Activated T-helper 1 cell treated with anti-CD3 and anti-CD28 coated beads, Interleukin-12 subunit alpha, Interleukin-12 subunit beta, Interleukin-2, Interleukin-4 antibody, amounts not matched to agents 30 ng/mL and 10 ng/mL and 1 ng/mL, durations not matched to agents 14 hours and 24 hours and 36 hours (primary cell): ENCODE measurements at regions of chr17 and their contacts with region 1.

Region 1: GRCh38 chr17:56833809-56834379 is at the starts of genes C17orf67 and DGKE:
- DNase-seq: peak; percentile 97
- H3K4me3 Mint-ChIP-seq: peak within 1 kb of the TSS; percentile 94
- H3K27ac Mint-ChIP-seq: peak within 1 kb of the TSS; percentile 96
- H3K4me1 Mint-ChIP-seq: peaks cover 65% of the 10 kb centered on the region
- H3K27me3 Mint-ChIP-seq: no peaks in the 10 kb centered on the region
- total RNA-seq, gene C17orf67: 3.1 TPM in 2 replicates
- total RNA-seq, gene DGKE: 31.8 and 34.3 TPM in 2 replicates

Region 2: GRCh38 chr17:55527540-55528118 is 1306.3 kb before region 1 on chr17:
- intact Hi-C with region 1: no loop called
- DNase-seq: no peak
- H3K4me3 Mint-ChIP-seq: no peak overlapping the region
- H3K27ac Mint-ChIP-seq: no peak overlapping the region
- H3K4me1 Mint-ChIP-seq: peaks cover 9% of the 10 kb centered on the region
- H3K27me3 Mint-ChIP-seq: peaks cover 5% of the 10 kb centered on the region

Region 3: DNA sequence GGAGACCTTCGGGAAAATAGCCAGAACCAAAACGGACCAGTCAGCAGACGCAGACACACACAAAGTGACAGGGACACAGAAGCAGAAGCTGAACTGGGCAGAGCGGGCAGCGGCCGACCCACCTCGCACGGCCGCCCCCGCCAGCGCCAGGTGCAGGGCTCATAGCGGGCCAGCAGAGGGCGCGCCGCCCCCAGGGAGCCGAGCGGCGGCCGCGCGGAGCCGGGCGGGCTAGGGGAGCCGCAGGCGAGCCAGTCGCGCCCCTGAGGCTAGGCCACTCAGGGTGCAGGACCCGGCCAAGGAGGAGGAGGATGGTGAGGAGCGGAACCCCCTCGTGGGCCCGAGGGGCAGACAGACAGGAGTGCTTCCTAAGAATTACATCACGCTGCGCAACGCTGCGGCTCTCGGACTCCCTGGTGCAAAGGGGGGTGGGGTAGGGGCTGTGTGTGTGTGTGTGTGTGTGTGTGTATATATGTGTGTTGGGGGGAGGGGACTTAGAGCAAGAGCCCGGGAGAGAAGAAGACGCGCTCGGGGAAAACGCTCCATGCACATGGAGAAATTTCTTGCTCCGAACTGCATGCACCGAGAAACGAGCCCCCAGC is 241.3 kb before region 1 on chr17:
- intact Hi-C with region 1: loop called (anchors 1 kb)
- DNase-seq: peak; percentile 39
- H3K4me3 Mint-ChIP-seq: peak overlapping the region; percentile 66
- H3K27ac Mint-ChIP-seq: no peak overlapping the region
- H3K4me1 Mint-ChIP-seq: peaks cover 17% of the 10 kb centered on the region
- H3K27me3 Mint-ChIP-seq: peaks cover 56% of the 10 kb centered on the region

Region 4: DNA sequence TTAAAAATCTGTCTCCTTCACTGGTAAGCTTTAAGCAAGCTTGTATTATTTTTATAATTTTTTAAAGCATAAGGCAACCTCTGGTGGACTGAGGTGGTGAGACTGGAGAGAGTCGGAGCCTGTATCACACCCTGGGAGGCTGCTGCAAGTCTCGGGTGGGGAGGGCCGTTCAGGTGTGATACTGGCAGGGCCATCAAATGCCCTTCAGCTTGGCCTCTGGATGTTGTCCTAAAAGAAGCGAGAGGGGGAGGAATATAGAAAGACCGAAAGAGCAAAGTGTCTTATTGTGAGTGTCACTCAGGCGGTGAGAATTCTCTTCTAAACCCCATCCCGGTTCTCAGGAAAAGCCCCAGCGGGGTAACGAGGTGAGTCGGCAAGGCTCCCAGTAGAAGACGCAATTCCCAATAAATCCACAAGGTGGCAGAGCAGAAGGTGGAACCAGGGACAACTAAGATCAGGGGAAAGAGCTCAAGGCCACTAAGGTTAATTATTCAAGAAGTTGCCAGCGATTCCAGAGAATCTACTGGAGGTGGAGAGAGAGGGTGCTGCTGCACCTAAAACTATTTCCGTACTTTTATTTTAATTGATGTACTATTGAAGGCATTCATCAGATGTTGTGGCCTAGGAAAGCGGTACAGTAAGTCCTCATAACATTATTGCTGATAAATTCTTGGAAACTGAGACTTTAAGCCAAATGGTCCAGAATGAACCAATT is 14.3 kb before region 1 on chr17:
- intact Hi-C with region 1: loop called (anchors 1 kb)
- DNase-seq: peak; percentile 62
- H3K4me3 Mint-ChIP-seq: no peak overlapping the region
- H3K27ac Mint-ChIP-seq: no peak overlapping the region
- H3K4me1 Mint-ChIP-seq: peaks cover 7% of the 10 kb centered on the region
- H3K27me3 Mint-ChIP-seq: peaks cover 6% of the 10 kb centered on the region

Region 5: GRCh38 chr17:56939901-56940343 is 106.0 kb after region 1 on chr17:
- intact Hi-C with region 1: loop called (anchors 1 kb)
- DNase-seq: no peak
- H3K4me3 Mint-ChIP-seq: no peak overlapping the region
- H3K27ac Mint-ChIP-seq: peak overlapping the region; percentile 58
- H3K4me1 Mint-ChIP-seq: peaks cover 23% of the 10 kb centered on the region
- H3K27me3 Mint-ChIP-seq: no peaks in the 10 kb centered on the region

Region 6: GRCh38 chr17:56977673-56978395 is 143.9 kb after region 1 on chr17 and contains the start of gene SCPEP1:
- intact Hi-C with region 1: loop called (anchors 1 kb)
- DNase-seq: peak; percentile 67
- H3K4me3 Mint-ChIP-seq: peak within 1 kb of the TSS; percentile 89
- H3K27ac Mint-ChIP-seq: peak within 1 kb of the TSS; percentile 79
- H3K4me1 Mint-ChIP-seq: peaks cover 19% of the 10 kb centered on the region
- H3K27me3 Mint-ChIP-seq: peaks cover 29% of the 10 kb centered on the region
- total RNA-seq, gene SCPEP1: 11.6 and 13.9 TPM in 2 replicates

Region 7: GRCh38 chr17:57255776-57256681 is 422.1 kb after region 1 on chr17 and contains the start of gene MSI2:
- intact Hi-C with region 1: loop called (anchors 5 kb)
- DNase-seq: peak; percentile 84
- H3K4me3 Mint-ChIP-seq: peak within 1 kb of the TSS; percentile 89
- H3K27ac Mint-ChIP-seq: peak within 1 kb of the TSS; percentile 93
- H3K4me1 Mint-ChIP-seq: peaks cover 47% of the 10 kb centered on the region
- H3K27me3 Mint-ChIP-seq: no peaks in the 10 kb centered on the region
- total RNA-seq, gene MSI2: 272 and 278 TPM in 2 replicates

Region 8: DNA sequence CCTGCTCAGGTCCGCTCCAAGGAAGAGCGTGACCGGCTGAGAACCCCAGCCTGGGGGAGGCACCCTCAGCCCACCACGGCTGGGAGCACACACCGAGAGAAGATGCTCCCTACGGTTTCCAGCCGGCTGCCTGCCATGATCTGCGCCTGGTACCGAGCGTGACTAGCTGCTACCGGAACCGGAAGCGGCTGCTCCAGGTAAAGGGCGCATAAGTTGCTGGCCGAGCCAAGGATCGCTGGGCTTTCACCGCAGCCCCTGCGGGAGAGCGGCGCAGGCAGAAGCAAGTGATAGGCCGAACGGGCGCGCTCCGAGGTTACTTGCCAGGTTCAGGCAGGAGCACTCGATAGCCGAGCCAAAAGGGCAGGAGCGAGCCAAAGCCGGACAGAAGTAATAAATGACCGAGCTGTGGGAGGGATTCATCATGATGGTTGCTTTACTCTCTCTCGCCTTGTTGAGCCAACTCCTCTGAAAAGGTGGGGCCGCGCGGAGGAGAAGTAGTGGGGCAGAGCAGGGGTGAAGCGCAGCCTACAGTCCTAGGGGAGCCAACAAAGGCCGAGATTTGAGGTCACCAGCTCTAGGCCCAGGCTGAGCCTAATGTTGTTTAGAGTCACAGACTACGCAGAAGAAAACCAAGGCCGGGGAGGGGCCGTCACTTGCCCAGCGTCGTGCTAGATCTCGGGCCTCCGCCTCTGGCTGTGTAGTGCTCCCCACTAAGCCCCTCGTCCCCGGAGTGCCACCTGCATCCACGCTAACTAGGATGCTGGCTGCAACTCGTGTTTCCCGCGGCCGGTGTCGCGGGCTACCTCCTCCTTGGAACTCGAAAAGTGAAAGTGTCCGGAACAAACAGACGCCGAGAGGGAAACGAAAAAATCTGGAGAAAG is 1016.2 kb after region 1 on chr17 and contains the start of gene MRPS23:
- intact Hi-C with region 1: loop called (anchors 5 kb)
- DNase-seq: peak; percentile 96
- H3K4me3 Mint-ChIP-seq: peak within 1 kb of the TSS; percentile 99
- H3K27ac Mint-ChIP-seq: peak within 1 kb of the TSS; percentile 99
- H3K4me1 Mint-ChIP-seq: peaks cover 18% of the 10 kb centered on the region
- H3K27me3 Mint-ChIP-seq: no peaks in the 10 kb centered on the region
- total RNA-seq, gene MRPS23: 79.6 and 87.0 TPM in 2 replicates